Ovary (tissue), 10 donors: ENCODE measurements at regions of chr15 and their contacts with region 1.

Region 1: GRCh38 chr15:24966364-24967103 is 11.7 kb downstream of the SNRPN start:
- DNase-seq: no peak
- H3K4me3 ChIP-seq: no peak overlapping the region
- H3K27ac ChIP-seq: no peak overlapping the region
- H3K4me1 ChIP-seq: no peaks in the 10 kb centered on the region
- H3K27me3 ChIP-seq: no peaks in the 10 kb centered on the region
- CTCF ChIP-seq: no peak
- EP300 ChIP-seq: no peak
- POLR2A ChIP-seq: no peak

Region 2: DNA sequence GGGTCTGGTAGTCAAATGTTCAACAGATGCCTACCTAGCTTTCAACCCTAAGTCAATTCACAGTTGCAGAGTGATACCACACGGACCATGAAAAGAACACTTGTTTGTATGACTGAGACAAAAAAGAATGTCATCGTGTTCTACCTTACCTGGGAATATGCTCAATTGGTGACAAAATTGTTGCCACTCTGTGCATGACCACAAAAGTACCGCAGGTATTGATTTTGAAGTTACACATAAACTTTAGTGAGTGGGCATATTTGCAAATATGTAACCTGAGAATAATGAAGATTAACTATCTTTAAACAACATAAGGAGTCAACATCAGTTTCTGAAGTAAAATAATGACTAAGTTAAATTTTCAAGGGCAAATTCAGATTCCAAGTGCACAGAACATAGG is 65.1 kb before region 1 on chr15:
- intact Hi-C with region 1: loop called in 1 of 4 experiments (anchors 10 kb)
- DNase-seq: no peak
- H3K4me3 ChIP-seq: no peak overlapping the region
- H3K27ac ChIP-seq: no peak overlapping the region
- H3K4me1 ChIP-seq: peaks cover 1% of the 10 kb centered on the region
- H3K27me3 ChIP-seq: no peaks in the 10 kb centered on the region
- CTCF ChIP-seq: no peak
- EP300 ChIP-seq: no peak
- POLR2A ChIP-seq: no peak